ENCODE measurements at regions of chr12 and their contacts with region 1.

Region 1: DNA sequence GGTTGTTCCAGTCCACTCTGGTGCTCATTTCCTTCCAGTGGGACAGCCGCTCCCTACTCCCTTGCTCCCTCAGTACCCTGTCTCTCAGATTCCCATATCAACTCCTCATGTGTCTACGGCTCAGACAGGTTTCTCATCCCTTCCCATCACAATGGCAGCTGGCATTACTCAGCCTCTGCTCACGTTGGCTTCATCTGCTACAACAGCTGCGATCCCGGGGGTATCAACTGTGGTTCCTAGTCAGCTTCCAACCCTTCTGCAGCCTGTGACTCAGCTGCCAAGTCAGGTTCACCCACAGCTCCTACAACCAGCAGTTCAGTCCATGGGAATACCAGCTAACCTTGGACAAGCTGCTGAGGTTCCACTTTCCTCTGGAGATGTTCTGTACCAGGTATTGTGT is 69.9 kb downstream of the RAD52 start:
- DNase-seq: peak; percentile 25 to 55
- ATAC-seq: peak; percentile 87 to 98 (median 92)
- H3K4me3 ChIP-seq: no peak overlapping the region
- H3K27ac ChIP-seq: peak overlapping the region; percentile 43
- H3K4me1 ChIP-seq: no peaks in the 10 kb centered on the region
- H3K27me3 ChIP-seq: no peaks in the 10 kb centered on the region
- CTCF ChIP-seq: no peak

Region 2: GRCh38 chr12:920676-921075 is 41.0 kb after region 1 on chr12:
- intact Hi-C with region 1: loop called in 1 of 2 experiments (anchors 5 kb)
- DNase-seq: no peak
- ATAC-seq: no peak
- H3K4me3 ChIP-seq: no peak overlapping the region
- H3K27ac ChIP-seq: no peak overlapping the region
- H3K4me1 ChIP-seq: no peaks in the 10 kb centered on the region
- H3K27me3 ChIP-seq: no peaks in the 10 kb centered on the region
- CTCF ChIP-seq: no peak

Region 3: DNA sequence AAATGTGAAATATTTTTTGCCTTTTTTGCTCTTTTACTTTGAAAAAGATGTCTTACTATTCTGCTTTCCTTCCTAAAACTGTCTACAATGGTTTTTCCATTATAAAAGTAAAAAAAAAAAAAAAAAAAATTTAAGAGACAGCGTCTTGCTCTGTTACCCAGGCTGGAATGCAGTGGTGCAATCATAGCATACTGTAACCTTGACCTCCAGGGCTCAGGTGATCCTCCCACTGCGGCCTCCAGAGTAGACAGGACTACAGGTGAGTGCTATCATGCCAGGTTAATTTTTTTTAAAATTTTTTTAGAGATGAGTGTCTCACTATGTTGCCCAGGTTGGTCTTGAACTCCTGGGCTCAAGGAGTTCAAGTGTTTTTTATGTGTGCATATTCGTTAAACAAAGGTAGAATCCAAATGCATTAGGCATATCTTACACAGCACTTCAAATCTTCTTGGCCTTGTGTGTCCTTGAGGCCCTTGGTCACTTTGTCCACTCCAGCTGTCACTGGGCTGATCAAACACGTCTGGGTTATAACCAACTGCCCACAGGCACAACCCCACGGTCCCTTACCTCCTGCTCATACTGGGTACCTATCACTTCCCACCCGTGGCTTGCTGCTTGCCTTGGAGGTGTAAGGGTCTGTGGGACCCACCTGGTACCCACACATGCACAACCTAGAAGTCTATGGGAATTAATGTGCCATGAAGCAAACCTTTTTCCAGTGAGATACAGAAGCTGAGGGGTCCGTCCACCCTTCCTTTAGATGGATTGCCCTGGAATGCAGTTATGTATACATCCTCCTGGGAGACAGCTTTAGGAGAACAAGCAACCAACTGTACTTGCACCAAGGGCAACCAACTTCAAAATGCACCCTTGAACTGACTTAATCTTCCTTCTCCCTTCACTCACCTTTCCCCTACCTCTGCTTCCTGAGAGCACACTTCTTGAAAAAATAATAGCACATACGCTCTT is 57.0 kb after region 1 on chr12:
- intact Hi-C with region 1: loop called in 1 of 2 experiments (anchors 10 kb)
- DNase-seq: no peak
- ATAC-seq: peak in 1 of 4 donors; percentile 21
- H3K4me3 ChIP-seq: no peak overlapping the region
- H3K27ac ChIP-seq: no peak overlapping the region
- H3K4me1 ChIP-seq: no peaks in the 10 kb centered on the region
- H3K27me3 ChIP-seq: no peaks in the 10 kb centered on the region
- CTCF ChIP-seq: no peak

Region 4: DNA sequence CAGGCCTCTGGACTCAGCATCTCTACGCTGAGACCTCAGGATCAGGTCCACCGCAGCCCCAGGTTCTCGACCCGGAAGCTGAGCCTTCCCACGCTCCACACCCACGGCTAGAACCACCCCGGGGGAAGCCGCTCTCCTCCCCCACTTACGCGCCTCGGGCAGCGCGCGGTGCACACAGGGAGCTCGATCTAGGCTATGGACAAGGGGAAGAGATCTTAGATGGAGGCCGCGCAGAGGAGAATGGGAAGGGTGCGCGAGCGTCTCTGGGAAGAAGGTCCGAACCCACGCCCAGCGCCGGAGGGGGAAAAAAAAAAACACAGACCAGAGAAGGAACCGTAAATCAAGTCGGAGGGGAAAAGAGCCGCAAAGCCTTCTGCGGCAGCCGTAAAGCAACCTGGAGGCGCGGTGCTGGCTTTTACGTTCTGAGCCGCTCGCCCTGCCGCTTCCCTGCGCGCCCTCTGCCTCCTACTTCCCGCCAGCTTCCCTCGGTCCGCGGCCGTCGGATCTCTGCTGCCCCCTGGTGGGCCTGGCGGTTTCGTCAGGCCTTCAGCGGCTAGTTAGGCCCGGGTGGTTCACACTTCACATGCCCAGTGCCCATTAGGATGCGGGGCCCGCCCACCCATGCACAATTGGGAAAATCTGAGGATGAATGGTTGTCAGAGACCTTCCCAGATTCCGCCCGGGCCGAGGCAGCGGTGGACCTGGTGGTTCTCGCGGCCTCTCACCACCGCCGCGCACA is 70.0 kb after region 1 on chr12 and contains the start of gene RAD52:
- intact Hi-C with region 1: no loop called
- DNase-seq: peak; percentile 98 to 99
- ATAC-seq: peak; percentile 93 to 94 (median 94)
- H3K4me3 ChIP-seq: peak within 1 kb of the TSS; percentile 95
- H3K27ac ChIP-seq: peak within 1 kb of the TSS; percentile 97
- H3K4me1 ChIP-seq: peaks cover 21% of the 10 kb centered on the region
- H3K27me3 ChIP-seq: no peaks in the 10 kb centered on the region
- CTCF ChIP-seq: peak; percentile 99
- total RNA-seq, gene RAD52: 6.7 to 12.8 (median 9.2) TPM

Region 5: DNA sequence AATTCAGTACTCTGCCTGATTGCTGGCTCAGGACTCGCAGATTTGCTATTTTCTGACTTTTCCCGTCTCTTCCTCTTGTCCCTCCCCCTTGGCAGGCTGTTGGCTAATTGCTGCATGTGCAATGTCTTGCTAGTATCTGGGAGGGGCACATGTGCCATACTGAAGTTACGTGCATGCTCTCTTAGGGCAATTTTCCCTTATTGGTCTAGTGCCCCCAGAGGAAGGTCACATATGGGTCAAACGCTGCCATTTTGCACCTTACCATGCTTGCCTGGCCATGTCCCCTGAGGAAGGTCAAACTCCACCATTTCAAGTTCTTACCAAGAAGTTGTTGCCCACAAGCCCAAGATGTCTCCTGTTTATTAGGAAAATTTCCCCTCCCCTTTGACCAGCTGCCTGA is 97.5 kb after region 1 on chr12:
- intact Hi-C with region 1: no loop called
- DNase-seq: no peak
- ATAC-seq: no peak
- H3K4me3 ChIP-seq: no peak overlapping the region
- H3K27ac ChIP-seq: no peak overlapping the region
- H3K4me1 ChIP-seq: peaks cover 7% of the 10 kb centered on the region
- H3K27me3 ChIP-seq: no peaks in the 10 kb centered on the region
- CTCF ChIP-seq: no peak